ENCODE measurements at regions of chr14 and their contacts with region 1.

Region 1: DNA sequence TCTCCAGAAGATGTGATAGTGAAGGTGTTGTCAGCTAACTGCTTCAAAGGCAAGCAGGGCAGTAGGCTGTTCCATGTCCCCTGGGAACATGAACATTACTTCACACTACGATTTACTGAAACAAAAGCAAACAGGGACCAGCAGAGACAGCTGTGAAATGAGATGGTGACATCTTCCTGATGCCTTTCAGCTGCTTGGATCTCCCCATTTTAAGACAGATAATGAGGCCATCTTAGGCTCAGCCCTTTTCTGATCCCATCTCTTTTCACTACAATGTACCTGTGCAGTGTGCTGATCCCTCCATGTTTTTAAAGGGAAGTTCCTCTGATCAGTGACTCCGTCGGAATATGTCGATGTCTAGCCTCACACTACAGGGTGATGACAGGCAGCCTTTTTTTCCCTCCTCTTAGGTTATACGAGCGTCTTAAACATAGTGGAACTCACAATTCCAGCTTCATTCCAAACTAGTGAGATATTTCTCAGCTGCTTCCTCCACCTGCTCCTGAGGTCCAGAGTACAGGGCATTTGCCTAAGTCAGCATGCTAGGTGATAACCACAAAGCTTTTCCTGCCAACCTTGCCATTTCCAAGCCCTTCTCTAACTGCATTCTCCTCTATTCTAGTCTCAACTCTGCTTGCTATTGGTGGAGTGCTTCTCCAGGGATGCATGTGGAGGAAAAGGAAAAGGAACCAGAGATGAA is 87.6 kb upstream of the EGLN3 start:
- DNase-seq: no peak
- ATAC-seq: no peak
- H3K4me3 Mint-ChIP-seq: no peak overlapping the region
- H3K27ac Mint-ChIP-seq: no peak overlapping the region
- H3K4me1 Mint-ChIP-seq: peaks cover 17% of the 10 kb centered on the region
- H3K27me3 Mint-ChIP-seq: peaks cover 1% of the 10 kb centered on the region

Region 2: GRCh38 chr14:34007902-34008301 is 30.6 kb before region 1 on chr14:
- CTCF ChIA-PET with region 1: no interaction called
- POLR2A ChIA-PET with region 1: no interaction called
- intact Hi-C with region 1: no loop called
- DNase-seq: no peak
- ATAC-seq: no peak
- H3K4me3 Mint-ChIP-seq: no peak overlapping the region
- H3K27ac Mint-ChIP-seq: no peak overlapping the region
- H3K4me1 Mint-ChIP-seq: peaks cover 3% of the 10 kb centered on the region
- H3K27me3 Mint-ChIP-seq: no peaks in the 10 kb centered on the region

Region 3: DNA sequence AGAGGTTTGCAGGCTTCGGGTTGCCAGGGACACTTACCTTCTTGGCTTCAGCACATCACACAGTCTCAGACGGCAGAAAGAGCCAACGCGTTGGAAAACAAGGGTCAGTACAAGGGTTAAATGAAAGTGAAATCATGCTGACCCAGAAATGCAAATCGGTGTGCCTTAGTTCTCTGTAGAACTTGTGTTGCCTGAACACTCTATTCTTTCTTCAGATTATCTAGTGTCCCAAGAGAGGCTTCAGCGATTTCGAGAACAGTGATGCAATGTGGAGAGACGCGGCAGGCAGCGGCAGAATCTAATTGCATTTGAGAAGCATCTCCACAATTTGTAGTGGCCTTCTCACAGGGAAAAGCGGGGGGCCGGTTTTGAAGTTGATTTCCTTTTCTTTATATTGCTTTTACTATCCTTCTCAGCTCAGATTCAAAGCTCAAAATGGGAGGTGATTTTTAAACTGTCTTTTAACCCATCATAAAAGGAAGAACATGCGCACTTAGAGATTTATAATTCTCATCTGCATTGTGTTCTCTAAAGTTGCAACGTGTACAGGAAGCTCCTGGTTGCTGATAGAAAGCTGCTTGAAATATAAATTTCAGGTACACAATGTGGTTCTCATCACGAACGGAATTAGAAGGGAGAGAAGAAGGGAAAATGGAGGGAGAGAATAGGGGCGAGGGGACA is 19.8 kb before region 1 on chr14:
- CTCF ChIA-PET with region 1: no interaction called
- POLR2A ChIA-PET with region 1: no interaction called
- intact Hi-C with region 1: loop called (anchors 1 to 2 kb)
- DNase-seq: peak; percentile 22
- ATAC-seq: peak; percentile 59
- H3K4me3 Mint-ChIP-seq: peak overlapping the region; percentile 67
- H3K27ac Mint-ChIP-seq: peak overlapping the region; percentile 83
- H3K4me1 Mint-ChIP-seq: peaks cover 14% of the 10 kb centered on the region
- H3K27me3 Mint-ChIP-seq: no peaks in the 10 kb centered on the region

Measured in activated CD4-positive, alpha-beta T cell treated with anti-CD3 and anti-CD28 coated beads for 36 hours (primary cell).